ENCODE measurements at regions of chr5 and their contacts with region 1.

Region 1: GRCh38 chr5:1641560-1642166 is 117.9 kb upstream of the LPCAT1 start:
- DNase-seq: peak; percentile 74 to 84
- ATAC-seq: peak in 3 of 4 donors; percentile 62 to 76 (median 74)
- H3K4me3 ChIP-seq: no peak overlapping the region
- H3K27ac ChIP-seq: no peak overlapping the region
- H3K4me1 ChIP-seq: no peaks in the 10 kb centered on the region
- H3K27me3 ChIP-seq: peaks cover 4 to 24% (median 8%) of the 10 kb centered on the region in 3 donors
- CTCF ChIP-seq: peak; percentile 44

Region 2: GRCh38 chr5:1167728-1168709 is 473.6 kb before region 1 on chr5:
- intact Hi-C with region 1: loop called (anchors 5 to 10 kb)
- DNase-seq: peak; percentile 65 to 67
- ATAC-seq: peak; percentile 56 to 79 (median 65)
- H3K4me3 ChIP-seq: no peak overlapping the region
- H3K27ac ChIP-seq: no peak overlapping the region
- H3K4me1 ChIP-seq: no peaks in the 10 kb centered on the region
- H3K27me3 ChIP-seq: peaks cover 0 to 25% (median 1%) of the 10 kb centered on the region in 3 donors
- CTCF ChIP-seq: peak; percentile 51

Region 3: GRCh38 chr5:1385395-1386273 is 256.0 kb before region 1 on chr5:
- intact Hi-C with region 1: loop called in 1 of 2 experiments (anchors 10 kb)
- DNase-seq: peak; percentile 84 to 89
- ATAC-seq: peak; percentile 84 to 93 (median 86)
- H3K4me3 ChIP-seq: peak overlapping the region; percentile 74
- H3K27ac ChIP-seq: no peak overlapping the region
- H3K4me1 ChIP-seq: no peaks in the 10 kb centered on the region
- H3K27me3 ChIP-seq: peaks cover 0 to 67% (median 18%) of the 10 kb centered on the region in 3 donors
- CTCF ChIP-seq: no peak

Region 4: DNA sequence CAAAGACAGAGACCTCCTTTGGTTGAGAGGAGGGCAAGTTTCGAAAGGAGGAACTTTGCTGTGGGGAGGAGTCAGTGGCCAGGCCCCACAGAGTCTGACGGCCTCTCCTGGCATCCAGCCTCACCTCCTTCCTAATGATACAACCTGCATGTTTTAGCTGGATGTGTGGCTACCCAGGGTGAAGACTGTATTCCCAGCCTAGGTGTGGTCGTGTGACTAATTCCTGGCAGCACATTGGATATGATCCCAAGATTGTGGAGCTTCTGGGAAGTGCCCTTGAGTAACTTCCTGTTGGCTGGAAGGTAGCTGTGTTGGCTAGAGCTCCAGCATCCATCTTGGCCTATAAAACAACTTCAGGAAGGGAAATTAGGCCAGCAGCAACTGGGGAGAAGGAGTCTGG is 98.9 kb before region 1 on chr5:
- intact Hi-C with region 1: no loop called
- DNase-seq: peak in 1 of 2 donors; percentile 60
- ATAC-seq: peak; percentile 36 to 71 (median 58)
- H3K4me3 ChIP-seq: no peak overlapping the region
- H3K27ac ChIP-seq: no peak overlapping the region
- H3K4me1 ChIP-seq: no peaks in the 10 kb centered on the region
- H3K27me3 ChIP-seq: no peaks in the 10 kb centered on the region
- CTCF ChIP-seq: no peak

Measured in psoas muscle (tissue), 8 donors.